ENCODE measurements at regions of chr1 and their contacts with region 1.

Region 1: DNA sequence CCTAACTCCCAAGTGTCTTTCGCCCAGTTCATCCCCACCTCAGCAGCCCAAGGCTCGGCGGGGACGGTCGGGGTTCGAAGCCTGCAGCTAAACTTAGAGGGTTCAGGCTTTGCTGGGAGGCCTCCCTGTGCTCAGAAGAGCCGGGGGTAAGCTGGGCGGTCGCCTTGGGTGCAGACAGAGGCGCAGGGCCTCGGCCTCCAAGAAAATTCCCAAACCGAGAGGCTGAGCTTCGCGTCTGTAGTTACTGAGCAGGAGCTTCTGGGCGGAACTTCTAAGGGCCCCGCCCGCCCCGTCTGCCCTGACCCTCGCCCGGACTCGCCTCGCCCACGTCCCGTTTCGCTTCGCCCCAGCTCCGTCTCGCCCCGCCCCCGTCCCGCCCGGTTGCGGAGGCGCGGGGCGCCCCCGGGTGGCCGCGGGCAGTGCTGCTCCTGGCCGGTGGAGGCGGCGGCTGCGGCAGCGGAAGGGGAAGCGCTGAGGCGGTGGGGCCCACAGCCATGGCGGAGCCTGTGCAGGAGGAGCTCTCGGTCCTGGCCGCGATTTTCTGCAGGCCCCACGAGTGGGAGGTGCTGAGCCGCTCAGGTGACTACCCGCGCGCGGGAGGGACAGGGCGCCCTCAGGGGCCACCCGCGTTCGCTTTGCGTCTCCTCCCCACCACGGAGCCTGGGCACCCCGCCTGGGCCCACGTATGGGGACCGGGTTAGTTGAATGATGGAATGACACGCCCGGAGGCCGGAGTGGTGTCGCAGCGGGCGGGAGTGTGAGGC is at the start of gene RWDD3:
- DNase-seq: peak; percentile 95
- H3K4me3 Mint-ChIP-seq: peak within 1 kb of the TSS; percentile 86
- H3K27ac Mint-ChIP-seq: peak within 1 kb of the TSS; percentile 70
- H3K4me1 Mint-ChIP-seq: peaks cover 41% of the 10 kb centered on the region
- H3K27me3 Mint-ChIP-seq: peaks cover 7% of the 10 kb centered on the region
- total RNA-seq, gene RWDD3: 10.8 to 13.9 TPM

Region 2: DNA sequence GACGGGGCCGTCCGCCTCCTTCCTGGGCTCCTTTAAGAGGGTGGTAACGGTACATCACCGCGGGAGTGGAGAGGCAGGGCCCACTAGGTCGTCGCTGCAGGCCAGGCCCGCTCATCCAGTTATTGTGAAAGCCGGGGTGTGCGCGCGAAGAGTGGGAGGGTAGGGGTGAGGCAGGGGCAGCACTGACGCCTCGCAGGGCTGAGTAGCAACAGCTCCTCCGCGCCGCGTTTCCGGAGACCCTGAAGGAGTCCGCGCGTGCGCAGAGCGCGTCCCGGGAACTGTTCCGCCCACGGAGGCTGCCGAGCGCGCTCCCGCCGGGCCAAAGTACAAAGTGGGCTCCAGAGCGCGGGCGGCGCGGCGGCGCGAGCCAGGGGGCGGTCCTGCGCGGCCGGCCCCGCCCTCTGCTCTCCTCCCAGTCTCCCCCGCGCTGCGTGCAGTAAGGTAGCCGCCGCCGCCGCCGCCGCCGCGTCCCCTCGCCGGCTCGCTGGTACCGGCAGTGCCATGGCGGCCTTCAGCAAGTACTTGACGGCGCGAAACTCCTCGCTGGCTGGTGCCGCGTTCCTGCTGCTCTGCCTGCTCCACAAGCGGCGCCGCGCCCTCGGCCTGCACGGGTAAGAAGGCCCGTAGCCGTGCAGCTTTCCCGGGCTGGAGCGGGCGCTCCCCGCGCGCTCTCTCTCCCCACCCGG is 815.8 kb before region 1 on chr1 and contains the start of gene ABCD3:
- CTCF ChIA-PET with region 1: no interaction called
- POLR2A ChIA-PET with region 1: no interaction called
- intact Hi-C with region 1: loop called (anchors 1 kb)
- DNase-seq: peak; percentile 98
- H3K4me3 Mint-ChIP-seq: no peak within 1 kb of the TSS
- H3K27ac Mint-ChIP-seq: peak within 1 kb of the TSS; percentile 55
- H3K4me1 Mint-ChIP-seq: peaks cover 35% of the 10 kb centered on the region
- H3K27me3 Mint-ChIP-seq: peaks cover 2% of the 10 kb centered on the region
- total RNA-seq, gene ABCD3: 33.7 to 34.0 TPM

Region 3: DNA sequence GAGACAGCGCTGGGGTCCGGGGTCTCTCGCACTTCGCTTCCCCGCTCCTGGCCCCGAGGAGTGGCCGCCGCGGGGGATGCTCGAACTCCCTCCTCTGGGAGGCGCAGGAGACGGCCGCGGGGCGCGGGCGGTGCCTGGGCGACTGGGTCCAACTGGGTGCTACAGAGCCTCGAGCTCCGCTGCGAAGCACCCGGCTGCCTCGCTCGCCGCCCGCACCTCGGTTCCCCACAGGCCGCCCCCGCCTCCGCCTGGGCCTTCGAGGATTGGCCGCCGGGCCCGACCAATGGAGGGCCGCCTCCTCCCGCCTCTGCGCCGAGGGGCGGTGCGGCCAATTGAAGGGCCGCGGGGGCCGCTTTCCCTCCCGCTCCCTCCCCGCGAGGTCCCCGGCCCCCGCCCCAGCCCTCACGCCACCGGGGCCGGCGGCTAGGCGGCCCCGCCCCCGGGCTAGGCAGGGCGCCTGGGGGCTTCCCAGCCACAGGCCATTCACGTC is 307.0 kb before region 1 on chr1 and contains the start of gene CNN3:
- CTCF ChIA-PET with region 1: no interaction called
- POLR2A ChIA-PET with region 1: no interaction called
- intact Hi-C with region 1: loop called (anchors 10 kb)
- DNase-seq: peak; percentile 77
- H3K4me3 Mint-ChIP-seq: peak within 1 kb of the TSS; percentile 74
- H3K27ac Mint-ChIP-seq: no peak within 1 kb of the TSS
- H3K4me1 Mint-ChIP-seq: peaks cover 14% of the 10 kb centered on the region
- H3K27me3 Mint-ChIP-seq: peaks cover 29% of the 10 kb centered on the region
- total RNA-seq, gene CNN3: 3.9 to 4.6 TPM

Region 4: DNA sequence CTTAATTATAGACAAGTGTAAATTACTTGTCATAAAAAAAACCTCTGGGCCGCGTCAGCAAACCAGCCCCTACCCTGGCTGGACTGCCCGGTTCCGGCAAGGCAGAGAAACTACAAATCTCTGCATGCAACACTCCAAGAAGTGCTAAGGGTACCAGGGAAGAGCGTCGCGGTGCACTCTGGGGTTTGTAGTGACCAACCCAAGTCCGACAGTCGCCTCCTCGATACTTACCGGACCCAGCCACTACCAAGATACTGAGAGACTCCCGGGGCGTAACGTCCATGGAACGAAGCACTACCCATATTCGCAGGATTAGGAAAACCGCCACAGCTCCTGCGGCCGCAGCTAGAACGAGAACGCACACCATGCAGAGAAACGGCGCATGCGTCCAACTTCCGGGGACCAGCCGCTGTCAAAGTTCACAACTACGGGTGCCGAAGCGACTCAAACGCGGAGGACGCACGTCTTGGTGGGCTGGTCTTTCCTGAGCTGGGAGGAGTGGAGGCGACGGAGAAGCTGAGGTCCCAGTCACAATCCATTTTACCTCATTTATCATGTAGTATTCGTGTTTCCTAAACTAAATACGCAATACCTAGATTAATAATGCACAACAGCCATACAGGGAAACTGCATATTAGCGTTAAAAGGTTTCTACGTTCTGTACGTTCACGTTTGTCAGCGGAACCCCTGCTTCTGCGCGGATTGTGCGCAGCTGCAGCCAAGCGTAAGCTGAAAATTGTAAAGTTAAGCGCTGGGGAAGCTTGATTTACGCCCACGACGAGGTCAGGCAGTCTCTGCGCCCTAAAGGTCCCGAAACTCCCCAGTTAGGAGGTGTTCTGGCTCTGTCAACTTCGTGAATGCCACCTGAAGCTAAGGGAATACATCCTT is 161.1 kb before region 1 on chr1 and contains the start of gene ALG14:
- CTCF ChIA-PET with region 1: interaction called, 23 read pairs
- POLR2A ChIA-PET with region 1: interaction called, 11 read pairs
- intact Hi-C with region 1: loop called (anchors 1 kb)
- DNase-seq: peak; percentile 95
- H3K4me3 Mint-ChIP-seq: peak within 1 kb of the TSS; percentile 90
- H3K27ac Mint-ChIP-seq: peak within 1 kb of the TSS; percentile 92
- H3K4me1 Mint-ChIP-seq: peaks cover 14% of the 10 kb centered on the region
- H3K27me3 Mint-ChIP-seq: no peaks in the 10 kb centered on the region
- total RNA-seq, gene ALG14: 4.3 to 4.4 TPM

Region 5: GRCh38 chr1:95116580-95117206 is 117.2 kb before region 1 on chr1:
- CTCF ChIA-PET with region 1: interaction called, 14 read pairs
- POLR2A ChIA-PET with region 1: interaction called, 4 read pairs
- intact Hi-C with region 1: loop called (anchors 1 kb)
- DNase-seq: peak; percentile 62
- H3K4me3 Mint-ChIP-seq: peak overlapping the region; percentile 78
- H3K27ac Mint-ChIP-seq: no peak overlapping the region
- H3K4me1 Mint-ChIP-seq: peaks cover 6% of the 10 kb centered on the region
- H3K27me3 Mint-ChIP-seq: peaks cover 20% of the 10 kb centered on the region

Region 6: DNA sequence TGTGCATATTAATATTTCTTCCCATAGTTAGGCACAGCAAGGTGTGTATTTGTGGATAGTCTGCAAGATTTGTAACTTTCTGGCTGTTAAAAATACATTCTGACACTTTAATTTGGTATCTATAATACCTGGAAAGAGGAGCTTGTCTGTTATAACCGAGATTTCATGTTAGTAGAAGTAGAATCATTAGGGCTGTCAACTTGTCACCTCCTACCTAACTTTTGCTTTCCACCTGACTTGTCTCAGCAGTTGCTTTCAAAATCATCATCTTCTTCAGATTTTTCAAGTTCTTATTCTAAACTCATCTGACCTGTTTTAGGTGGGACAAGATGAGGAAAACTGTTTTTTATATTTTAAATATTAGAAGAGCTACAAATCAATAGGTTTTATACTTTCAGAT is 11.1 kb after region 1 on chr1:
- CTCF ChIA-PET with region 1: interaction called, 11 read pairs
- POLR2A ChIA-PET with region 1: no interaction called
- intact Hi-C with region 1: no loop called
- DNase-seq: no peak
- H3K4me3 Mint-ChIP-seq: no peak overlapping the region
- H3K27ac Mint-ChIP-seq: no peak overlapping the region
- H3K4me1 Mint-ChIP-seq: peaks cover 19% of the 10 kb centered on the region
- H3K27me3 Mint-ChIP-seq: no peaks in the 10 kb centered on the region

Region 7: DNA sequence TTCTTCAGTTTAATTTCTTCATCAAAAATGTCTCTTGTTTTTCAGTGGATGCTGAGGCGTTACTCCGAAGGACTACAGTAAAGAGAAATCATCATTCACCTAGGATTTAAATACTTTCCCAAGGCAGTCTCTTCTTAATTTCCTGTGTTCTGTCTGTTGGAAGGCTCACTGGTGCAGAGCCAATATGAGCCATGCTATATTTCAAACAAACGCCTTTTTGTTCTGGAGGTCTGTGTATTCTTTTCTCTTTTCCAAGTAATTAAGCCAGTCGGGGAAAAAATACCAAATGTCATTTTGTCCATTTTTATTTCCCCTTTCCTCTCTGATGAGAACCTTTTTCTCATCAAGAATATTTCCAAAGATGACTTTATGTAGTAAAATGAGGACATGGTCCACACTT is 206.6 kb after region 1 on chr1:
- CTCF ChIA-PET with region 1: no interaction called
- POLR2A ChIA-PET with region 1: no interaction called
- intact Hi-C with region 1: no loop called
- DNase-seq: no peak
- H3K4me3 Mint-ChIP-seq: no peak overlapping the region
- H3K27ac Mint-ChIP-seq: no peak overlapping the region
- H3K4me1 Mint-ChIP-seq: no peaks in the 10 kb centered on the region
- H3K27me3 Mint-ChIP-seq: no peaks in the 10 kb centered on the region